ENCODE measurements at regions of chr4 and their contacts with region 1.

Region 1: DNA sequence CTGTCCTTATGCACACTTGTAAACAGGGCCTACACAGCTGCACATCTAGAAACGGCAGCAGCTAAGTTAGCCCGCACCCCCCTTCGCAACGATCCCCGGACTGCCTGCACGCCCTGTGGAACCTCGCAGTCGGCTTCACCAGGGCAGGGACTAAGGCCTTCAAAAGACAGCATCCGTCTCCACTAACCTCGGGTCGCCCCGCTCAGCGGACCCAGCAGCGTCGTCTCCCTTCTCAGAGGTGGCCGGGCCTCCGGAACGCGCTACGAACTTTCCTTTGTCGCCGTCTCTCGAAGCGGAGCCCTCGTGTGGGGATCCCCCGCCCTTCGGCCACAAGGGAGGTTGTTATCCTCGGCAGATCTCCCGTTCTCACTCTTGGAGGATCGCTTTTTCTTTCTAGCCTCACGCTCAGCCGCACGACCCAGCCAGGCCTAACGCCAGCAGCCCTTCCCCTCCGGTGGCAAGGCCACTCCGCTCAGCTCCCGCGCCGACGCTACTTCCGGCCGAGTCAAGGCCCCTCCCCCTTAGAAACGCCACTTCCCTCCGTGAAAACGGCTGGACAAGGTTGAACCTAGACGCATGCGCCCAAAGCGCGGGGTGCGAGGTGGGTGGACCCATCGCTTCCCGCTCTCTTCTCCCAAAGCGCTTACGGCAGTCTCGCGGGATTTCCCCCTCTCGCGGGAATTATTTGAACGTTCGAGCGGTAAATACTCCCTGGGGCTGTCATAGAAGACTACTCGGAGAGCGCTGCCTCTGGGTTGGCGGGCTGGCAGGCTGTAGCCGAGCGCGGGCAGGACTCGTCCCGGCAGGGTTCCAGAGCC is at the starts of genes DCAF16 and NCAPG:
- DNase-seq: peak; percentile 94 to 100 (median 96)
- ATAC-seq: peak; percentile 88
- H3K4me3 ChIP-seq: peak within 1 kb of the TSS; percentile 65
- H3K27ac ChIP-seq: peak within 1 kb of the TSS; percentile 96
- H3K4me1 ChIP-seq: peaks cover 3 to 10% of the 10 kb centered on the region in 2 experiments; a peak in 4 of 5 replicates
- H3K27me3 ChIP-seq: no peaks in the 10 kb centered on the region
- CTCF ChIP-seq: peak in 1 of 3 experiments; percentile 30; a peak in 1 of 6 replicates
- EP300 ChIP-seq: no peak
- POLR2A ChIP-seq: peak; percentile 98
- RAD21 ChIP-seq: no peak
- polyA plus RNA-seq, gene DCAF16: 20.5 to 23.8 TPM
- polyA plus RNA-seq, gene NCAPG: 25.6 to 30.5 TPM

Region 2: GRCh38 chr4:17544205-17544604 is 266.3 kb before region 1 on chr4:
- CTCF ChIA-PET with region 1: interaction called, 7 read pairs
- POLR2A ChIA-PET with region 1: interaction called, 3 read pairs
- in situ Hi-C with region 1: no loop called
- intact Hi-C with region 1: loop called (anchors 2 kb)
- DNase-seq: peak in 1 of 4 experiments; percentile 52
- ATAC-seq: peak; percentile 70
- H3K4me3 ChIP-seq: no peak overlapping the region
- H3K27ac ChIP-seq: no peak overlapping the region; the same call in 2 of the 3 replicates
- H3K4me1 ChIP-seq: peaks cover 0 to 5% of the 10 kb centered on the region in 2 experiments; a peak in 4 of 5 replicates
- H3K27me3 ChIP-seq: no peaks in the 10 kb centered on the region; a peak in 1 of 5 replicates
- CTCF ChIP-seq: no peak
- EP300 ChIP-seq: no peak
- POLR2A ChIP-seq: no peak
- RAD21 ChIP-seq: no peak

Region 3: DNA sequence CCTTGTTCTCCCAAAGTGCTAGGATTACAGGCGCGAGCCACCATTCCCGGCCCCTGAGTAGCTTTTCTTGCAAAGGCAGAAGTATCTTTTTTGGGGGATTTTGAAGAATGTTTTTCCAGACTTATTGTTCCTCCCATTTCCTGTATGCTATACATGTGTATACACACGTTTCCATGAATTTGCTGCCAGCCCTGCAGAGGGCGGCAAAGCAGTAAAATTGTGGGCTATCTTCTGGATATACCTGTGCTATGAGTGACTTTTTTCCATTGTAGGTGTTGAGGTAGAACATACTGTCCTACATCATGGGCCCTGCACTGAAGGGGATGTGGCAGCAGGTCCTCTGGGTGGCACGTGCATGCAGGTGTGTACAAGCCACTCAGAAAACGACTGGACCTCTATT is 213.0 kb before region 1 on chr4:
- CTCF ChIA-PET with region 1: interaction called, 10 read pairs
- POLR2A ChIA-PET with region 1: no interaction called
- in situ Hi-C with region 1: no loop called
- intact Hi-C with region 1: no loop called
- DNase-seq: peak in 2 of 4 experiments; percentile 17 to 35
- ATAC-seq: peak; percentile 85
- H3K4me3 ChIP-seq: no peak overlapping the region
- H3K27ac ChIP-seq: no peak overlapping the region
- H3K4me1 ChIP-seq: no peaks in the 10 kb centered on the region
- H3K27me3 ChIP-seq: no peaks in the 10 kb centered on the region
- CTCF ChIP-seq: peak; percentile 19 to 67 (median 58); a peak in 4 of 6 replicates
- EP300 ChIP-seq: no peak
- POLR2A ChIP-seq: no peak
- RAD21 ChIP-seq: peak; percentile 41 to 60

Region 4: GRCh38 chr4:17797808-17798207 is 12.7 kb before region 1 on chr4:
- CTCF ChIA-PET with region 1: no interaction called
- POLR2A ChIA-PET with region 1: interaction called, 10 read pairs
- in situ Hi-C with region 1: no loop called
- intact Hi-C with region 1: no loop called
- DNase-seq: no peak
- ATAC-seq: no peak
- H3K4me3 ChIP-seq: no peak overlapping the region
- H3K27ac ChIP-seq: no peak overlapping the region
- H3K4me1 ChIP-seq: no peaks in the 10 kb centered on the region
- H3K27me3 ChIP-seq: no peaks in the 10 kb centered on the region
- CTCF ChIP-seq: no peak
- EP300 ChIP-seq: no peak
- POLR2A ChIP-seq: no peak
- RAD21 ChIP-seq: no peak

Region 5: GRCh38 chr4:18593445-18594002 is 783.1 kb after region 1 on chr4:
- CTCF ChIA-PET with region 1: interaction called, 5 read pairs
- POLR2A ChIA-PET with region 1: no interaction called
- in situ Hi-C with region 1: no loop called
- intact Hi-C with region 1: loop called (anchors 5 kb)
- DNase-seq: peak; percentile 61 to 74 (median 66)
- ATAC-seq: peak; percentile 87
- H3K4me3 ChIP-seq: no peak overlapping the region
- H3K27ac ChIP-seq: no peak overlapping the region
- H3K4me1 ChIP-seq: no peaks in the 10 kb centered on the region
- H3K27me3 ChIP-seq: no peaks in the 10 kb centered on the region
- CTCF ChIP-seq: peak; percentile 67 to 85 (median 76)
- EP300 ChIP-seq: no peak
- POLR2A ChIP-seq: no peak
- RAD21 ChIP-seq: peak; percentile 81 to 83

Region 6: DNA sequence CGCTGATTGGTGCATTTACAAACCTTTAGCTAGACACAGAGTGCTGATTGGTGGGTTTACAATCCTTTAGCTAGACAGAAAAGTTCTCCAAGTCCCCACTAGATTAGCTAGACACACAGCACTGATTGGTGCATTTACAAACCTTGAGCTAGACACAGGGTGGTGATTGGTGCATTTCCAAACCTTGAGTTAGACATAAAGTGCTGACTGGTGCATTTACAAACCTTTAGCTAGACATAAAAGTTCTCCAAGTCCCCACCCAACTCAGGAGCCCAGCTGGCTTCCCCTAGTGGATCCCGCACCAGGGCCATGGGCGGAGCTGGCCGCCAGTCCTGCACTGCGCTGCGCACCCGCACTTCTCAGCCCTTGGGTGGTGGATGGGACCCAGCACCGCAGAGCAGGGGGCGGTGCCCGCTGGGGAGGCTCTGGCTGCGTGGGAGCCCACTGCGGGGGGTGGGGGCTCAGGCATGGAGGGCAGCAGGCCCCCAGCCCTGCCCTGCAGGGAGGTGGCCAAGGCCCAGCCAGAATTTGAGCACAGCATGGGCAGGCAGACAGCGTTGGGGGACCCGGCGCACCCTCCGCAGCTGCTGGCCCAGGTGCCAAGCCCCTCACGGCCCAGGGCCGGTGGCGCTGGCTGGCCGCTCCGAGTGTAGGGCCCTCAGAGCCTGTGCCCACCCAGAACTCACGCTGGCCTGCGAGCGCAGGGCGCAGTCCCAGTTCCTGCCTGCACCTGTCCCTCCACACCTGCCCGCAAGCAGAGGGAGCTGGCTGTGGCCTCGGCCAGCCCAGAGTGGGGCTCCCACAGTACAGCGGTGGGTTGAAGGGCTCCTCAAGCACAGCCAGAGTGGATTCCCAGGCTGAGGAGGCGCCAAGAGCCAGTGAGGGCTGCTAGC is 820.0 kb after region 1 on chr4:
- CTCF ChIA-PET with region 1: no interaction called
- POLR2A ChIA-PET with region 1: no interaction called
- in situ Hi-C with region 1: no loop called
- intact Hi-C with region 1: no loop called
- DNase-seq: no peak
- ATAC-seq: no peak
- H3K4me3 ChIP-seq: no peak overlapping the region
- H3K27ac ChIP-seq: no peak overlapping the region
- H3K4me1 ChIP-seq: no peaks in the 10 kb centered on the region
- H3K27me3 ChIP-seq: no peaks in the 10 kb centered on the region
- CTCF ChIP-seq: no peak
- EP300 ChIP-seq: no peak
- POLR2A ChIP-seq: no peak
- RAD21 ChIP-seq: no peak

Measured in K562 (cell line).